CD8-positive, alpha-beta memory T cell (primary cell): ENCODE measurements at regions of chr9 and their contacts with region 1.

Region 1: GRCh38 chr9:121121582-121122087 is 46.9 kb downstream of the CNTRL start:
- DNase-seq: peak; percentile 92 to 97 (median 94)
- H3K4me3 ChIP-seq: peak overlapping the region; percentile 63
- H3K4me3 Mint-ChIP-seq: peak overlapping the region; percentile 79 to 91 (median 88)
- H3K27ac ChIP-seq: peak overlapping the region; percentile 64
- H3K27ac Mint-ChIP-seq: peak overlapping the region; percentile 59 to 95 (median 84)
- H3K4me1 ChIP-seq: peaks cover 38% of the 10 kb centered on the region
- H3K4me1 Mint-ChIP-seq: peaks cover 41 to 63% (median 63%) of the 10 kb centered on the region in 3 donors
- H3K27me3 ChIP-seq: no peaks in the 10 kb centered on the region
- H3K27me3 Mint-ChIP-seq: no peaks in the 10 kb centered on the region

Region 2: DNA sequence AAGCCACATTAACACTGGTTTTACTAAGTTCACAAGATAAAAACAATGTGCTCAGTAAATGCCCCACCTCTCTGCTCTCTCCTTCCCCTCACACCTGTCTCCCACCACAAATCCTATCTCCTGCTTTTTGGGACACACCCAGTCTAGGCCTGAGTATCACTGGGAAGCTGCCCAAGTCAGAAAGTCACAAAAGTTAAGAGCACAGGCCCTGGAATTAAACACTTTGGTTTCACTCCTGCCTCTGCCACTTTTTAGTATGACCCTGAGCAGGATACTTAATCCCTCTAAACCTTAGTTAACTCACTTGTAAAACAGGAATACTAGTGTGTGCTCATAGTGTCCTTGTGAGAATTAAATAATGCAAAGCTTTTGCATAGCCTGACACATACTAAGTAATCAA is 82.8 kb before region 1 on chr9:
- CTCF ChIA-PET with region 1: no interaction called
- POLR2A ChIA-PET with region 1: no interaction called
- DNase-seq: no peak
- H3K4me3 ChIP-seq: no peak overlapping the region
- H3K4me3 Mint-ChIP-seq: no peak overlapping the region
- H3K27ac ChIP-seq: no peak overlapping the region
- H3K27ac Mint-ChIP-seq: peak overlapping the region in 1 of 8 donors; percentile 6
- H3K4me1 ChIP-seq: no peaks in the 10 kb centered on the region
- H3K4me1 Mint-ChIP-seq: no peaks in the 10 kb centered on the region
- H3K27me3 ChIP-seq: no peaks in the 10 kb centered on the region
- H3K27me3 Mint-ChIP-seq: peaks cover 0 to 4% of the 10 kb centered on the region in 2 donors

Region 3: DNA sequence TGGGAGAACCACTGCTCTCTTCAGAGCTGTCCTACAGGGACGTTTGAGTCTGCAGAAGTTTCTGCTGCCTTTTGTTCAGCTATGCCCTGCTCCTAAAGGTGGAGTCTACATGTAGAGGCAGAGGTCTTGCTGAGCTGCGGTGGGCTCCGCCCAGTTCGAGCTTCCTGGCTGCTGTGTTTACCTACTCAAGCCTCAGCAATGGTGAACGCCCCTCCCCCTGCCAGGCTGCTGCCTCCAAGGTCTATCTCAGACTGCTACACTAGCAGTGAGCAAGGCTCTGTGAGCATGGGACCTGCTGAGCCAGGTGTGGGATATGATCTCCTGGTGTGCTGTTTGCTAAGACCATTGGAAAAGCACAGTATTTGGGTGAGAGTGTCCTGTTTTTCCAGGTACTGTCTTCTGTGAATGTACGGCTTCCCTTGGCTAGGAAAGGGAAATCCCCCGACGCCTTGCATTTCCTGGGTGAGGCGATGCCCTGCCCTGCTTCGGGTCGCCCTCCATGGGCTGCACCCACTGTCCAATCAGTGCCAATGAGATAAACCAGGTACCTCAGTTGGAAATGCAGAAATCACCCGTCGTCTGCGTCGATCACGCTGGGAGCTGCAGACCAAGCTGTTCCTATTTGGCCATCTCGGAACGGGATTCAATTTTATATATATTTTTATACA is 11.6 kb after region 1 on chr9:
- CTCF ChIA-PET with region 1: interaction called, 8 read pairs
- POLR2A ChIA-PET with region 1: interaction called, 22 read pairs
- DNase-seq: peak; percentile 44 to 88 (median 65)
- H3K4me3 ChIP-seq: peak overlapping the region; percentile 67
- H3K4me3 Mint-ChIP-seq: peak overlapping the region; percentile 55 to 80 (median 72)
- H3K27ac ChIP-seq: peak overlapping the region; percentile 47
- H3K27ac Mint-ChIP-seq: peak overlapping the region; percentile 41 to 91 (median 86)
- H3K4me1 ChIP-seq: peaks cover 30% of the 10 kb centered on the region
- H3K4me1 Mint-ChIP-seq: peaks cover 63 to 88% (median 80%) of the 10 kb centered on the region in 3 donors
- H3K27me3 ChIP-seq: no peaks in the 10 kb centered on the region
- H3K27me3 Mint-ChIP-seq: no peaks in the 10 kb centered on the region

Region 4: GRCh38 chr9:121169094-121169601 is 47.5 kb after region 1 on chr9:
- CTCF ChIA-PET with region 1: interaction called, 13 read pairs
- POLR2A ChIA-PET with region 1: no interaction called
- DNase-seq: peak in 2 of 5 donors; percentile 9 to 45
- H3K4me3 ChIP-seq: no peak overlapping the region
- H3K4me3 Mint-ChIP-seq: no peak overlapping the region
- H3K27ac ChIP-seq: no peak overlapping the region
- H3K27ac Mint-ChIP-seq: peak overlapping the region; percentile 47 to 82 (median 76)
- H3K4me1 ChIP-seq: peaks cover 16% of the 10 kb centered on the region
- H3K4me1 Mint-ChIP-seq: peaks cover 19 to 25% (median 23%) of the 10 kb centered on the region in 3 donors
- H3K27me3 ChIP-seq: no peaks in the 10 kb centered on the region
- H3K27me3 Mint-ChIP-seq: no peaks in the 10 kb centered on the region